Activated CD4-positive, alpha-beta memory T cell treated with anti-CD3 and anti-CD28 coated beads, Interleukin-2, amount 10 ng/mL, durations not matched to agents 7 days and 5 days (primary cell): ENCODE measurements at regions of chr3 and their contacts with region 1.

Region 1: DNA sequence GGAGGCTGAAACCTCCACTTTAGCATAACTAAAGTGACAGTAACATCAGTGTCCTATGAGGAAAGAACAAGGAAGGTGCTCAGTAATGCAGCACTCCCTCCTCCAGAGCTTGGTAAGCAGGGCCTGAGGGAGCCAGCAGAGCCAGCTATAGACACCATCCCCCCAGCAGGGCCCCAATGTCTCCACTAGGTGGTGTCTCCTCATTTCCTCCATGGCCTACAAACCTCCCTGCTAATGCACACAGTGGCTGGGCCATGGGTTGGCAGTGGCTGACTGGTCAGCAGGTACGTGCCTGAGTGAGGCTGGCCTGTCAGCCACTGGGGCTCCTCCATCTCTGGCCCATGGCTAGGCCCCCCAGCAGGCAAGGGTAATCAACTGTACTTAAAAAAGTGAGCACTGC is 13.6 kb downstream of the MRPS25 start:
- DNase-seq: peak; percentile 55
- H3K4me3 Mint-ChIP-seq: no peak overlapping the region
- H3K27ac Mint-ChIP-seq: no peak overlapping the region
- H3K4me1 Mint-ChIP-seq: peaks cover 33% of the 10 kb centered on the region
- H3K27me3 Mint-ChIP-seq: no peaks in the 10 kb centered on the region

Region 2: DNA sequence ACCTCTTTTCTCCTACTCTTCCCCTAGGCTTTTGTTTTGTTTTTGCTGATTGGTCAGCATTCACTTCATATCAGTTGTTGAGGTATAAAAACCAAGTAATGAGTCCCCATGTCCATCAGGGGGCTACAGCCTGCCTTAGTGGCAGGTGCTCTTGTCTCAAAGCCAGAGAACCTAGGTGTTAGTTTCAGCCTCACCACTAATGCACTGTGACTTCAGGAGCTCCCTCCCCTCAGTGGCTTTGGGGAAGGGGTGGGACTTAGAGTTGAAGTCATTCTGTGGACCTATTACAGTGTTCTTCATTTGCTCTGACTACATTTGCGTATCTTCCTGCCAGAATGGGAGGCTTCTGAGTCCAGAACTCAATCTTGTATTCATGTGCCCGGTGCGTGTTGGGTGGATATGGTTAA is 62.5 kb before region 1 on chr3:
- CTCF ChIA-PET with region 1: no interaction called
- POLR2A ChIA-PET with region 1: no interaction called
- DNase-seq: peak; percentile 28
- H3K4me3 Mint-ChIP-seq: no peak overlapping the region
- H3K27ac Mint-ChIP-seq: no peak overlapping the region
- H3K4me1 Mint-ChIP-seq: peaks cover 14% of the 10 kb centered on the region
- H3K27me3 Mint-ChIP-seq: no peaks in the 10 kb centered on the region

Region 3: GRCh38 chr3:15038306-15038705 is 13.2 kb before region 1 on chr3:
- CTCF ChIA-PET with region 1: interaction called, 15 read pairs
- POLR2A ChIA-PET with region 1: interaction called, 3 read pairs
- DNase-seq: no peak
- H3K4me3 Mint-ChIP-seq: no peak overlapping the region
- H3K27ac Mint-ChIP-seq: no peak overlapping the region
- H3K4me1 Mint-ChIP-seq: no peaks in the 10 kb centered on the region
- H3K27me3 Mint-ChIP-seq: no peaks in the 10 kb centered on the region

Region 4: DNA sequence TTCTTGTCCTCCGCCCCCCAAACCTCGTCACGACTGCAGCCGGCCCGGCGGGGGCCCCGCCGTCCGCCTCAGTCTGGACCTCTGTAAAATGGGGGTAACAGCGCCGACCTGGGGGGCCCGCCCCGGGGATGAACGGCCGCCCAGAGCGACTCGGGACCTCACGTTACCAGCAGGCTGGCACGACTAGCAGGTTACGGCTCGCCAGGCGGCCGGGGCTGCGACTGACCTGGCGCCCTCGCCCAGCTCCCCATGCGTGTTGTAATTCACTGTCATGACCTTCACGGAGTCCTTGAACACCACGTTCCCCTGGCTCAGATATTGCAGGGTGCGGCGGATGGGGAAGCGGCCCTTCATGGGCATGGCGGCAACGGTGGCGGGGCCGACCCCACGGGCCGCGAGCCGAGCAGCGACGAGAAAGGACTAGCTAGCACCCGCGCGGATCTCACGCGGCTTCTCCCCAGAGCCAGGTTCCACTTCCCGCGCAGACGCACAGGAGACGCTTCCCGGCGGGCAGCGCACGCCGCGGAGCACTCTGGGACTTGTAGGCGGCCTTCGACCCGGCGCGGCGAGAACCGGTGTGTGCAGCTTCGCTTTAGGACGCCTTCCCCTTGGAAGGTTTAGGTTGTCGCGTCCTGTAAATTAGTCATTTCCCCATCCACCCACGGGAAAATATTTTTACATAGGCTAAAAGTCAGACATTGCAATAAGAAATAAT is 13.5 kb after region 1 on chr3 and contains the start of gene MRPS25:
- CTCF ChIA-PET with region 1: interaction called, 28 read pairs
- POLR2A ChIA-PET with region 1: interaction called, 20 read pairs
- DNase-seq: peak; percentile 92
- H3K4me3 Mint-ChIP-seq: peak within 1 kb of the TSS; percentile 96
- H3K27ac Mint-ChIP-seq: peak within 1 kb of the TSS; percentile 89
- H3K4me1 Mint-ChIP-seq: peaks cover 29% of the 10 kb centered on the region
- H3K27me3 Mint-ChIP-seq: no peaks in the 10 kb centered on the region
- total RNA-seq, gene MRPS25: 34.6 to 35.0 TPM

Region 5: GRCh38 chr3:15659254-15659975 is 607.9 kb after region 1 on chr3:
- CTCF ChIA-PET with region 1: no interaction called
- POLR2A ChIA-PET with region 1: no interaction called
- DNase-seq: no peak
- H3K4me3 Mint-ChIP-seq: no peak overlapping the region
- H3K27ac Mint-ChIP-seq: no peak overlapping the region
- H3K4me1 Mint-ChIP-seq: peaks cover 6% of the 10 kb centered on the region
- H3K27me3 Mint-ChIP-seq: peaks cover 3% of the 10 kb centered on the region